ENCODE measurements at regions of chr2 and their contacts with region 1.

Region 1: DNA sequence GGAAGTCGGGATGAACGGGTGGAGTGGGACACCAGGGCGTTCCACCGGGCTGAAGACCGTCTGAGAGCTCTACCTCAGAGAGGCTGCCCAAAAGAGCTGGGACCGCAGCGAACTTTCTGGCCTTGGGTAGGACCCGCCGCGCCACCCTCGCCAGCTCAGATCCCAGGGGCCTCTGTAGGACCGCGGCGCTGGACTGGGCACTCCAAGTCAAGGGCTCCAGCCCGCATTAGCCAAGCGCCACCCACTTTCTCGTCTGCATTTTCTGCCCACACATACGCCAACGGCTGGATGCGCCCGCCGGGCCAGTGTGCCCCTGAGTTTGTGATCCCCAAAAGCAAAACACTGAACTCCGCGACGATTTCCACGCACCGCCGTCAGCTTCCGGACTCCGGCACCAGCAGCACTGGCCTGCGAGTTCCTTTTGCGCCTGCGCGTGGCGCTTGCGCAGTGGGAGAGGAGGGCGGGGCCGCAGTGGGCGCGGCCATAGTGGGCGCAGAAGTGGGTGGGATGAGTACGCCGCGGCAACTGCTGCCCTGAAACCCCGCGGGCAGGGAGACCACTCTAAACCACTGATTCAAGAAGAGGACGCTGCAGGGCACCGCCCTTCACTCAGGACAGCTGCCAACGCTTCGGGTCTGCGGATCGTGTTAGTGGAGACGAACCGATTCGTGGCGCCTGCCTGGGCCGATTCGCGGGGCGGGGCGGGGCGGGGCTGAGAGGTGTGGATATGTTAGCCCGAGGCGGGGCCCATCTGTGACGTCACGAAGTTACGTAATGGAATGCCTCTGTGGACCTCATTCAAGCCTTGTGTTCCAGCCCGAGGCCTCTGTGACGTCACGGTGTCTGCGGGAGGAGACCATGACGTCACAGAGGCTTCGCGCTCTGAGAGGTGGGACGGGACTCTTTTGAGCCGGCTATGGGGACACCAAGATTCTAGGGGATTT is 10.5 kb downstream of the OSR1 start:
- DNase-seq: peak; percentile 97
- ATAC-seq: peak; percentile 92
- H3K4me3 Mint-ChIP-seq: peak overlapping the region; percentile 89
- H3K27ac Mint-ChIP-seq: peak overlapping the region; percentile 98
- H3K4me1 Mint-ChIP-seq: peaks cover 22% of the 10 kb centered on the region
- H3K27me3 Mint-ChIP-seq: peaks cover 27% of the 10 kb centered on the region

Region 2: DNA sequence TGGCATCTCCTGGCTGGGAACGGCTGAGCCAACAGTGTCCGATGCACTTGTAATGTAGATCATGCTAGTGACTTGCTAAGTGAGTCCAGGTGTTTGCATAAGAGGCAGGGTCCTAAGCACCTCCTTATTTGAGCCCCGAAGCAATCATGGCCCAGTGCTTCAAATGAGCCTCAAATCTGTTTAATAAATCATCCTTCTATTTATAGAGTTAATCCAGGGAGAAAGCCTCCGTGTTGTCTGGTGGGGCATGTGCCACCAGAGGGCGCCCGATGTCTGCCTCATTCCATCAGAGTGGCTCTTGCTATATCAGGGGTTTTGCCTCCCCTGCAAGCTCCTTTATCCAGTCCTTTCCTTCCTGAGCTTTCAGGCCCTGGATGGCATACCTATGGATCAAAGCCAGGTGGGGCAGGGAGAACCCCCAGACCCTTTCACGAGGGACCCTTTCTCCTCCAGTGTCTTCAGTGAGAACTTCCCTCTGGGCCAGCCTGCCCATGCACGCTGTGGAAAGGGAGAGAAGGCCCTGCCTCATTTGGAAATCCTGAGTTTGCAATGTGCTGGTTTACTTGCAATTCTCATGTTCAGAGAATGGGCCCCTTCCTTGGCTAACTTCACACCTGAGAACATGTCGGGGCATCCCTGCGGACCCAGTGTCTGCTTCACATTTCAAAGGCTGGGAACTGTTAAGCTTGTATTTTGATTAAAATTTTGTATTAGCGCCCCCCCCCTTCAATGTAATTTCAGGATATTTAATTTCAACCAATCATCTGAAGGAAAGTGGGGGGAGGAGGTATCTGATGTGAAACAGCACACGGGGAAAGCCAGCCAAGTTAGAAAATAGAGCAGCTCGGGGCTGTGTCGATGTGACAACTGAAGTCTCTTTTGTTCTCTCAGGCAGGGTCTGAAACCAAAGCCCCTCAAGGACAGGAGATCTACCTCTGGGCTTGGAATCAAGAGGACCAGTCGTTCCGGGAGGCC is 827.2 kb before region 1 on chr2:
- CTCF ChIA-PET with region 1: no interaction called
- POLR2A ChIA-PET with region 1: no interaction called
- intact Hi-C with region 1: loop called in 1 of 2 experiments (anchors 5 kb)
- DNase-seq: peak; percentile 85
- ATAC-seq: peak; percentile 75
- H3K4me3 Mint-ChIP-seq: no peak overlapping the region
- H3K27ac Mint-ChIP-seq: no peak overlapping the region
- H3K4me1 Mint-ChIP-seq: no peaks in the 10 kb centered on the region
- H3K27me3 Mint-ChIP-seq: peaks cover 11% of the 10 kb centered on the region

Region 3: DNA sequence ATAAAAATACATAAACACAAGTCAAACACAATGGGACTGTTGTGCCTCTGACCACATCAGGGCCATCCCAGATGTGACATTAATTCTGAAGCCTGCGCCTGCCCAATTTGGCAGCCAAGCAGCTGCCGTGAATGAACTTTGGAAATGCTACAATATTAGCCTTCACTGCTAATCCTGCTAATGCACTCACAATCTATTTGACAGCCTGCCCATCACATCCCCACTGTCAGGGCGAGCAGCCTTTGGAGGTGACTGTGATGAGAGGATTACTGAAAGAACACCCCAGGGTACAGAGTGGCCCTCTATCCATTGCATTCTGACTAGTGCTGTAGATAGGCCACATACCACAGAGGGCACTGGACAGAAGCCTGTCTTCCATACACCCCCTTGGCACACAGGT is 11.1 kb before region 1 on chr2:
- CTCF ChIA-PET with region 1: no interaction called
- POLR2A ChIA-PET with region 1: no interaction called
- intact Hi-C with region 1: no loop called
- DNase-seq: no peak
- ATAC-seq: no peak
- H3K4me3 Mint-ChIP-seq: no peak overlapping the region
- H3K27ac Mint-ChIP-seq: no peak overlapping the region
- H3K4me1 Mint-ChIP-seq: no peaks in the 10 kb centered on the region
- H3K27me3 Mint-ChIP-seq: no peaks in the 10 kb centered on the region

Region 4: DNA sequence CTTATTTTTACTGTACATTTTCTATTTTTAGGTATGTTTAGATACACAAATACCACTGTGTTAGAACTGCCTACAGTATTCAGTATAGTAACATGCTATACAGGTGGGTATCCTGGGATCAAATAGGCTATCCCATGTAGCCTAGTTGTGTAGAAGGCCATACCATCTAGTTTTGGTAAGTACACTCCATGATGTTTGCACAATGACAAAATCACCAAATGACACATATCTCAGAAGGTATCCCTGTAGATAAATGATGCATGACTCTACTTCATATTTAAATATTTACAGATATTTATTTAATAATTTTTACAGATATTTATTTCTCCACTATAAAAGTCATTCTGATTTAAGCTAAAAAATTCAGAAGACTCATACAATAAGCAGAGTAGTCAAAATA is 244.3 kb after region 1 on chr2:
- CTCF ChIA-PET with region 1: no interaction called
- POLR2A ChIA-PET with region 1: no interaction called
- intact Hi-C with region 1: no loop called
- DNase-seq: no peak
- ATAC-seq: no peak
- H3K4me3 Mint-ChIP-seq: no peak overlapping the region
- H3K27ac Mint-ChIP-seq: no peak overlapping the region
- H3K4me1 Mint-ChIP-seq: no peaks in the 10 kb centered on the region
- H3K27me3 Mint-ChIP-seq: peaks cover 2% of the 10 kb centered on the region

Region 5: DNA sequence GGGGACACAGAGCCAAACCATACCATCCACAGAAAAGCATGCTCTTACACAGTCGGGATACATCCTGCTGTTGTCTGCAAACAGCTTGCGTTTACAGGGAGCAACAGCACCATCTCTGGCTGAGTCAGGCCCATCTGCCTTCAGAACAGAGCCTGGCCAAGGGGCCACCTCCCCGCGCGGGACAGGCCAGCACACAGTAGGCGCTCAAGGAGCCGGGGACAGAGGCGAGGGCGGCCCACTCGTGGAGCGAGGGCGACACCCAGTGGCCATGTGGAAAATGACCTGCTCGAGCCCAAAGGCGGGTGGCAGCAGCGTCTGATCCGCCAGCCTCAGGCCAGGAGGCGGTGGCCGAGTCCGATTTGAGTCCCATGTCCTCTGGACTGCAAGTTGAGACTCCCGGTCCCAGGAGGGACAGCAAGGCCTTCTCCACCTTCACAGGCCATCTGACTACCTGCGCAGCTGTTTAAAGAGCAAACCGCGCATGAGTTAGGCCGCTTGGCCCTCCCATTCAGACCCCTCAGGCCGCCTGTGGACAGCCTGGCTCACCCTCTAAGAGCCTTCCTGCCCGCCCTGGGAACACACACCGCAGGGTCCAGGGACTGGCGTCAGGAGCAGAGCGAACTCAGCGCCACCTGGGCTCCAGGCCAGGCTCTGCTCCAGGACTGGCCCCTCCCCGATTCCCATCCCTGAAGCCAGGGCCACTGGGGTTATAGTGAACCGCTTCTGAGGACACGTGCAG is 515.6 kb after region 1 on chr2:
- CTCF ChIA-PET with region 1: interaction called, 3 read pairs
- POLR2A ChIA-PET with region 1: no interaction called
- intact Hi-C with region 1: loop called in 1 of 2 experiments (anchors 1 kb)
- DNase-seq: peak; percentile 81
- ATAC-seq: peak; percentile 84
- H3K4me3 Mint-ChIP-seq: no peak overlapping the region
- H3K27ac Mint-ChIP-seq: no peak overlapping the region
- H3K4me1 Mint-ChIP-seq: peaks cover 8% of the 10 kb centered on the region
- H3K27me3 Mint-ChIP-seq: peaks cover 2% of the 10 kb centered on the region

Region 6: GRCh38 chr2:20051532-20052228 is 703.8 kb after region 1 on chr2 and contains the start of gene LAPTM4A:
- CTCF ChIA-PET with region 1: no interaction called
- POLR2A ChIA-PET with region 1: no interaction called
- intact Hi-C with region 1: loop called in 1 of 2 experiments (anchors 1 kb)
- DNase-seq: peak; percentile 99
- ATAC-seq: peak; percentile 98
- H3K4me3 Mint-ChIP-seq: no peak within 1 kb of the TSS
- H3K27ac Mint-ChIP-seq: no peak within 1 kb of the TSS
- H3K4me1 Mint-ChIP-seq: peaks cover 27% of the 10 kb centered on the region
- H3K27me3 Mint-ChIP-seq: peaks cover 11% of the 10 kb centered on the region
- total RNA-seq, gene LAPTM4A: 22.5 to 41.9 TPM

Region 7: GRCh38 chr2:20650880-20651730 is 1303.2 kb after region 1 on chr2 and contains the start of gene HS1BP3:
- CTCF ChIA-PET with region 1: no interaction called
- POLR2A ChIA-PET with region 1: no interaction called
- intact Hi-C with region 1: loop called in 1 of 2 experiments (anchors 5 kb)
- DNase-seq: peak; percentile 92
- ATAC-seq: peak; percentile 97
- H3K4me3 Mint-ChIP-seq: peak within 1 kb of the TSS; percentile 78
- H3K27ac Mint-ChIP-seq: peak within 1 kb of the TSS; percentile 86
- H3K4me1 Mint-ChIP-seq: peaks cover 22% of the 10 kb centered on the region
- H3K27me3 Mint-ChIP-seq: no peaks in the 10 kb centered on the region
- total RNA-seq, gene HS1BP3: 6.2 to 7.1 TPM

Measured in activated CD4-positive, alpha-beta T cell treated with anti-CD3 and anti-CD28 coated beads for 36 hours (primary cell).